HEK293 (cell line): ENCODE measurements at regions of chr17 and their contacts with region 1.

Region 1: DNA sequence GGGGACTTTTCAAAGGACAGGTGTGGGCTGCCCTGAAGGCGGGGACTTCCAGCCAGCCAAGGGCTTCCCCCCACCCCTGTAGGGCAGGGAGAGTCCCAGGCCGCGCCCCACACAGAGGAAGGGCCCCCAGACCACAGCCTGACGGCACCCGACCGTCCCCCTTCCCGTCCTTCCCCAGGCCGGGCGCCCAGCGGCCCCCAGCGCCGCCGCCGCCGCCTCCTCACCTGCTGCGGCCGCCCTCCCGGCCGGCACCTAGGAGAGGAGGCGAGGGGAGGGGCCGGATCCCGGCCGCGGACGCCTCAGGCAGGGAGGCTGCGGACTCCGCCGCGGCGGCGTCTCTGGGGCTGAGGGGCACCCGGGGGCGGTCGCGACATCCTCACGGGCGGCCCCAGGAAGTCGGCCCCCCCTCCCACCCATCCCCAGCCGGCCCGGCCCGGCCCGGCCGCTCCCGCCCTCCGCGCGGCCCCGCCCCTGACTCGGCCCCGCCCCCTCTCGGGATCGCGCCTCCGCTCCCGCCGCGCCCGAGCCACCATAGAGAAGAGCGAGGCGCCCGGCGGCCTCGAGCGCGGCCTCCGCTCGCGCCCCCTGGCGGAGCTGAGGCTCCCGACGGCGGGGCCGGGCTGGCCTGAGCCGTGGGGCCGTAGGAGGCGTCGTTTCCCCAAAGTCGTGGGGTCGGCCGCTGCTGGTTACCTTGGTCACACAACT is 25.5 kb upstream of the RFFL start:
- H3K4me3 ChIP-seq: peak overlapping the region; percentile 56
- H3K27ac ChIP-seq: peak overlapping the region; percentile 81
- H3K4me1 ChIP-seq: 0 out of 2 replicates have a peak, but pooled peaks cover 3% of the 10 kb centered on the region
- CTCF ChIP-seq: peak; percentile 71

Region 2: DNA sequence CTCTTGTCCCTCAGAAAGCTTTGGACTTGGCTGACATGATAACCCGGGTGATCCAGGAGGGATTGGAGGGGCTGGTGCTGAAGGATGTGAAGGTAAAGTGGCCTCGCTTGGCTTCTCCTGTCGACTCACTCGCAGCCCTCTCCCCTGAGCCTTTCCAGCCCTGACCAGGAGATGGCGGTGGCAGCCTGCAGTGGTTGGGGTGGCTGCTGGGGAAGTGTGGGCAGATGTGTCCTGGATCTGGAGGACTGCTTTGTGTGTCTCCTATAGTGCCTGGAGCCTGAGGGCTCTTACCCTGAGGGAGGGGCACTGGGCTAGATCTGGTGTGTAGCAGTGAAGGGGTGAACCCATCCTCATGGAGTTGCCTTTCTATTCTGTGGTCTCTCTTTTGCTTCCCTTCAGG is 90.8 kb before region 1 on chr17:
- CTCF ChIA-PET with region 1: interaction called, 10 read pairs
- POLR2A ChIA-PET with region 1: no interaction called
- H3K4me3 ChIP-seq: no peak overlapping the region
- H3K27ac ChIP-seq: no peak overlapping the region
- H3K4me1 ChIP-seq: no peaks in the 10 kb centered on the region
- CTCF ChIP-seq: peak; percentile 90

Region 3: DNA sequence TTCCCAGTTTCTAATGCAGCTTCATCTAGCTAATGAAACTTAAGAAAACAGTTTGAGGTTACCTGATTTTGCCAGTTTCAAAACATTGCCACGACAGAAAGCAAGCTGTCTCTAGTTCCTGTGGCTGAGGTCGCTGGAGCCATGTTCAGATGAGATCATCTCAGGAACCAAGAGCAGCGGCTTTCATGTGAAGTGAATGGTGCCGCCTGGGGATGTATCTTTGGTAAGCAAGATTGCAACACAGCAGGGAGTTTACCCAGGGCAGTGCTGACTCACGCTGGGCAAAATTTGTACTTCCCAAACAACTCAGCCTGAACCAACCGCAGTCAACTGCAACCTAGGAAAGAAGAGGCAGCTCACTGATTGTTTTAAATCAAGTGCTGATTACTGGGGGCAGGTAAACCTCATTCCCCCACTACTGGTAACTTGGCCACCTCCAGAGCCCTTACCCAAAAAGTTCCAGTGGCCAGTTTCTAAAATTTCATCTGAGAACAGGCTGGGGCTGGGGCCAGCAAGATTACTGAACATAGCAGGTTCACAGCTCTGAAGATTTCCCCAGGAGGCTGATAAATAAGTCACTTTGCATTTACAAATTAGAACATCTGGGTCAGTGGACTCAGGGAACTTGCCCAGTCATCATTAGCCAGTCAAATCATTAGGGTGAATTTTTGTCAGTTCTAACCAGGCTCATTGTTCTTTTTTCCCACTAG is 25.4 kb before region 1 on chr17 and contains the start of gene RFFL:
- CTCF ChIA-PET with region 1: interaction called, 12 read pairs
- POLR2A ChIA-PET with region 1: interaction called, 6 read pairs
- H3K4me3 ChIP-seq: peak within 1 kb of the TSS; percentile 22
- H3K27ac ChIP-seq: peak within 1 kb of the TSS; percentile 77
- H3K4me1 ChIP-seq: peaks cover 17% of the 10 kb centered on the region
- CTCF ChIP-seq: peak; percentile 69; the same call in 1 of the 2 replicates

Region 4: GRCh38 chr17:35103271-35103670 is 14.2 kb after region 1 on chr17:
- CTCF ChIA-PET with region 1: interaction called, 14 read pairs
- POLR2A ChIA-PET with region 1: no interaction called
- H3K4me3 ChIP-seq: no peak overlapping the region
- H3K27ac ChIP-seq: no peak overlapping the region
- H3K4me1 ChIP-seq: no peaks in the 10 kb centered on the region
- CTCF ChIP-seq: no peak

Region 5: GRCh38 chr17:35185849-35186248 is 96.8 kb after region 1 on chr17:
- CTCF ChIA-PET with region 1: no interaction called
- POLR2A ChIA-PET with region 1: no interaction called
- H3K4me3 ChIP-seq: no peak overlapping the region
- H3K27ac ChIP-seq: no peak overlapping the region
- H3K4me1 ChIP-seq: no peaks in the 10 kb centered on the region
- CTCF ChIP-seq: no peak